Mammary epithelial cell (primary cell): ENCODE measurements at regions of chr2 and their contacts with region 1.

Region 1: GRCh38 chr2:231627384-231628120 is 34.9 kb downstream of the TEX44 start:
- DNase-seq: no peak
- H3K4me3 ChIP-seq: no peak overlapping the region
- H3K27ac ChIP-seq: no peak overlapping the region
- H3K4me1 ChIP-seq: peaks cover 4% of the 10 kb centered on the region
- H3K27me3 ChIP-seq: no peaks in the 10 kb centered on the region
- CTCF ChIP-seq: no peak

Region 2: DNA sequence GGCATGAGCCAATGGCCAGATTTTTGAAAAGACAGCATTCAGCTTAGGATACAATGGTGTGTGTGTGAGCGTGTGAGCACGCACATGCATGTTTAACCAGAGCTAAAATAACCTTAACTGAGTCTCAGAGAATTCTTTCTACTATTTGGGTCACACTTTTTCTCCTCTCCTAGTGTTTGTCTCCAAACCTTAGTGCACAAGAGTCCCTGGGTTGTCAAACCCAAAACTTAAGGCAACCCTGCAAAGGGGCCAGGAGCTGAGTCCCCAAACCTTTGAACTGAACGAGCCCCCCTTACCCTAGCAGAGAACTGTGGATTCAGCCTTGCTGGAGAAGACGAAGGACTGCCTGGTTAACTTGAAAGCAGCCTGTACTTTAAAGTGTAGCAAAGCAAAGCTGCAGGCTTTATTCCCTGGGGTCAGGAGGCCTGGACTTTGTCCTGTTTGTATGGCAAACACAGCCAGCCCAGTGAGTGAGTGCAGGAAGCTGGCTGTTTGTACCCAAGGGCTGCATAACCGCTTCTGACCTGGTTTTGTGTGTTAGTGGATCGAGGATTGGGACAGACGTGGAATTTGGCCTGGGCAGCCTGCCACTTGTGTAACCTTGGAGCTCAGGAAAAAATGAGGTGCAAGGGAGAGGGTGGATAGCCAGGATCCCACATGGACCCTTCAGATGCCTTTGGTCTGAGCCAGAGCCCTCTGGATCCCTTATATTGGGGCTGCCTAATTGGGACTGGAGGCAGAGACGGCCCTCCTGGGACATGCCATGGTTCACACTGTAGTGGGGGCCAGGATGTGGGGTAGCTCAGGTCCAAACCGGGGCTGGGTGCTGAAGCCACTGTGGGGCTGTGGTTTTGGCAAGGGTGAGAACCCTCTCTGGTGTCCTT is 577.3 kb before region 1 on chr2:
- CTCF ChIA-PET with region 1: no interaction called
- dilution Hi-C with region 1: no loop called
- in situ Hi-C with region 1: no loop called
- intact Hi-C with region 1: no loop called
- DNase-seq: no peak
- H3K4me3 ChIP-seq: no peak overlapping the region
- H3K27ac ChIP-seq: no peak overlapping the region
- H3K4me1 ChIP-seq: peaks cover 7% of the 10 kb centered on the region
- H3K27me3 ChIP-seq: no peaks in the 10 kb centered on the region
- CTCF ChIP-seq: no peak

Region 3: DNA sequence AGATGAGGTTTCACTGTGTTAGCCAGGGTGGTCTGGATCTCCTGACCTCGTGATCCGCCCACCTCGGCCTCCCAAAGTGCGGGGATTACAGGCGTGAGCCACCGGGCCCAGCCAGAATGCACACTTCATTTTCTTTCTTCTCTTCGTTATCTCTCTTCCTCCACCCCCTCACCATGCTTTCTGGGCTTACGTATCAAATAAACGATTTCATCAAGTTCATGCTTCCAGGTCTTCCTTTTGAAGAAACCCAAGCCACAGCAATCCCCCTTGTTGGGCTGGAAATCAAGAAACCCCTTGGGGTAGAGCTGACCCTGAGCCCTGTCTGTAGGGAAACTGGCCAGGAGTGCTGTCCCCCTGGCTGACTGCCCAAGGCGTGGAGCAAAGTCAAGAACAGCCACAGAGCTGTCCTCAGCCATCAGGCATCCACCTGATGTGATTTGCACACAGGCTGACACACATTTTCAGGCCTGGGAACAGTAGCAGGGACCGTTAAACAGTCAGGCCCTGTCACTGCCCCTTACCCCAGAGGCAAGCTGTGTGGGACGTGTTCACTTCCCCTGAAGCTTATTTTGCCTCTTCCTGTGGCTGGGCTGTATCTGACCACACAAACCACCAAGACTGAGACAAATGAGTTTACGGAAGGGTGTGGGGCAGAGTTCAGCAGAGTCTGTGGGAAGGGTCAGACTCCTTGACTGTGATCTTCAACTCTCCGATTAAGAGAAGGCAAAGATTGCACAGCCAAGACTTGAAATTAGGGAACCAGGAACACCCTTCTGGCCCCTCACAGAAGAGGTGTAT is 82.2 kb before region 1 on chr2:
- CTCF ChIA-PET with region 1: no interaction called
- dilution Hi-C with region 1: loop called (anchors 5 kb)
- in situ Hi-C with region 1: no loop called
- intact Hi-C with region 1: no loop called
- DNase-seq: peak; percentile 26
- H3K4me3 ChIP-seq: no peak overlapping the region
- H3K27ac ChIP-seq: no peak overlapping the region
- H3K4me1 ChIP-seq: no peaks in the 10 kb centered on the region
- H3K27me3 ChIP-seq: no peaks in the 10 kb centered on the region
- CTCF ChIP-seq: no peak

Region 4: DNA sequence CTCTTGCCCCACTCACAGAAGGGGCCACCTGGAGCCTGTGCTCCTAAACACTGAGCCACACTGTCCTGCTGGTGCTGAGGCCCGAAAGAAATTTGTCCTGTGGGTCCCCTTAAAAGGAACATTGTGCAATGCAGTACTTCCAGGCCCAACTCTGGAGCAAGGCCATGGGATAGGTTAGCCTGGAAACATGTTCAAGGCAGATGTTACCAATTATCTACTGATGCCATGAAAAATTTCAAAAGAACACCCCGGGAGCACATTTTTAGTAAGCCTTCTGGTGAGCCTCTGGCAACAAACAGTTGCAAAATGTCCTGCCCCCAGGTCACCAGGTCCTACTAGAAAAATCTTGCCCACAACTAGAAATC is 68.4 kb after region 1 on chr2:
- CTCF ChIA-PET with region 1: no interaction called
- dilution Hi-C with region 1: no loop called
- in situ Hi-C with region 1: no loop called
- intact Hi-C with region 1: no loop called
- DNase-seq: no peak
- H3K4me3 ChIP-seq: no peak overlapping the region
- H3K27ac ChIP-seq: no peak overlapping the region
- H3K4me1 ChIP-seq: peaks cover under 1% of the 10 kb centered on the region
- H3K27me3 ChIP-seq: no peaks in the 10 kb centered on the region
- CTCF ChIP-seq: no peak